ENCODE measurements at regions of chr11 and their contacts with region 1.

Region 1: GRCh38 chr11:102341844-102342318 is 5.1 kb upstream of the BIRC2 start:
- DNase-seq: peak; percentile 60
- H3K4me3 ChIP-seq: no peak overlapping the region
- H3K27ac ChIP-seq: no peak overlapping the region
- H3K4me1 ChIP-seq: peaks cover 0 to 6% of the 10 kb centered on the region in 2 experiments; a peak in 3 of 4 replicates
- H3K27me3 ChIP-seq: no peaks in the 10 kb centered on the region
- CTCF ChIP-seq: peak; percentile 88
- EP300 ChIP-seq: no peak
- RAD21 ChIP-seq: peak; percentile 80

Region 2: GRCh38 chr11:102287964-102288724 is 53.7 kb before region 1 on chr11:
- CTCF ChIA-PET with region 1: interaction called, 40 read pairs
- POLR2A ChIA-PET with region 1: no interaction called
- DNase-seq: peak; percentile 80
- H3K4me3 ChIP-seq: peak overlapping the region; percentile 38 to 48
- H3K27ac ChIP-seq: peak overlapping the region; percentile 33 to 84; a peak in 3 of 4 replicates
- H3K4me1 ChIP-seq: peaks cover 19 to 20% of the 10 kb centered on the region in 2 experiments
- H3K27me3 ChIP-seq: no peaks in the 10 kb centered on the region
- CTCF ChIP-seq: peak; percentile 76
- EP300 ChIP-seq: no peak
- RAD21 ChIP-seq: peak; percentile 88

Region 3: DNA sequence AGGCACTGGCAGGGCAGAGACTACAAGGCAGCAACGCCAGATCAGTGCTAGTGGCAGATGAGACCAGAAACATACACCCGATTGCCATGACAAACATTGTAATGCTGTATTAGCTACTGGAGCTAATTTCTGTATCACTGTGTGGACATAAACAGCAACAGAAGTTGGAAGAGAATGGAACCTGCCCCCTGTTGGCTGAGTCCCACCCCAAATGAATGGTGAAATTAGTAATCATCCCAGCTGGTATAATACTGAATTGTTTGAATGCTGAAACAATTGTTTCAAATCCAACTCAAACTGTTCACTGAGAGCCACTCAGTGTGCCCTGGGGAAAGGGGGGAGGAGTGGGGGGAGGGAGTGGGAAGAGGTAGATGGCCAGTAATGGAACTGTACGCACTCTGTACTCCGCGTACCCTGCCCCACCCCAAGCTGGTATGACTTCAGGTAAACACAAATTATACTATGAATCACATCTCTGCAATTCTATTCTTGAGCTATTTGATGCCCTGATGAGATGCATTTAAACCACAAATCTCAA is 35.8 kb before region 1 on chr11:
- CTCF ChIA-PET with region 1: interaction called, 17 read pairs
- POLR2A ChIA-PET with region 1: no interaction called
- DNase-seq: peak; percentile 33
- H3K4me3 ChIP-seq: no peak overlapping the region
- H3K27ac ChIP-seq: 0 out of 4 replicates have a peak overlapping the region, but pooled peaks of 1 of the 2 experiments have one; percentile 17
- H3K4me1 ChIP-seq: peaks cover 10 to 16% of the 10 kb centered on the region in 2 experiments; a peak in 3 of 4 replicates
- H3K27me3 ChIP-seq: no peaks in the 10 kb centered on the region
- CTCF ChIP-seq: peak; percentile 36
- EP300 ChIP-seq: no peak
- RAD21 ChIP-seq: peak; percentile 13; the same call in 1 of the 2 replicates

Region 4: DNA sequence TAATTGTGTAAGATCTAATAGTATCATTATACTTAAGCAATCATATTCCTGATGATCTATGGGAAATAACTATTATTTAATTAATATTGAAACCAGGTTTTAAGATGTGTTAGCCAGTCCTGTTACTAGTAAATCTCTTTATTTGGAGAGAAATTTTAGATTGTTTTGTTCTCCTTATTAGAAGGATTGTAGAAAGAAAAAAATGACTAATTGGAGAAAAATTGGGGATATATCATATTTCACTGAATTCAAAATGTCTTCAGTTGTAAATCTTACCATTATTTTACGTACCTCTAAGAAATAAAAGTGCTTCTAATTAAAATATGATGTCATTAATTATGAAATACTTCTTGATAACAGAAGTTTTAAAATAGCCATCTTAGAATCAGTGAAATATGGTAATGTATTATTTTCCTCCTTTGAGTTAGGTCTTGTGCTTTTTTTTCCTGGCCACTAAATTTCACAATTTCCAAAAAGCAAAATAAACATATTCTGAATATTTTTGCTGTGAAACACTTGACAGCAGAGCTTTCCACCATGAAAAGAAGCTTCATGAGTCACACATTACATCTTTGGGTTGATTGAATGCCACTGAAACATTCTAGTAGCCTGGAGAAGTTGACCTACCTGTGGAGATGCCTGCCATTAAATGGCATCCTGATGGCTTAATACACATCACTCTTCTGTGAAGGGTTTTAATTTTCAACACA is 18.2 kb before region 1 on chr11:
- CTCF ChIA-PET with region 1: interaction called, 11 read pairs
- POLR2A ChIA-PET with region 1: no interaction called
- DNase-seq: no peak
- H3K4me3 ChIP-seq: no peak overlapping the region
- H3K27ac ChIP-seq: peak overlapping the region in 1 of 2 experiments; percentile 41; a peak in 2 of 4 replicates
- H3K4me1 ChIP-seq: peaks cover 0 to 14% of the 10 kb centered on the region in 2 experiments; a peak in 2 of 4 replicates
- H3K27me3 ChIP-seq: no peaks in the 10 kb centered on the region
- CTCF ChIP-seq: no peak
- EP300 ChIP-seq: peak in 1 of 2 experiments; percentile 25; a peak in 1 of 4 replicates
- RAD21 ChIP-seq: no peak

Region 5: GRCh38 chr11:102390667-102391465 is 49.0 kb after region 1 on chr11:
- CTCF ChIA-PET with region 1: interaction called, 13 read pairs
- POLR2A ChIA-PET with region 1: no interaction called
- DNase-seq: peak; percentile 63
- H3K4me3 ChIP-seq: no peak overlapping the region; a peak in 1 of 4 replicates
- H3K27ac ChIP-seq: 0 out of 4 replicates have a peak overlapping the region, but pooled peaks of 1 of the 2 experiments have one; percentile 4
- H3K4me1 ChIP-seq: no peaks in the 10 kb centered on the region; a peak in 1 of 4 replicates
- H3K27me3 ChIP-seq: no peaks in the 10 kb centered on the region
- CTCF ChIP-seq: peak; percentile 83
- EP300 ChIP-seq: no peak
- RAD21 ChIP-seq: peak; percentile 72

Region 6: GRCh38 chr11:103043826-103044624 is 702.1 kb after region 1 on chr11:
- CTCF ChIA-PET with region 1: no interaction called
- POLR2A ChIA-PET with region 1: no interaction called
- DNase-seq: no peak
- H3K4me3 ChIP-seq: no peak overlapping the region
- H3K27ac ChIP-seq: no peak overlapping the region
- H3K4me1 ChIP-seq: no peaks in the 10 kb centered on the region; a peak in 1 of 4 replicates
- H3K27me3 ChIP-seq: no peaks in the 10 kb centered on the region
- CTCF ChIP-seq: no peak
- EP300 ChIP-seq: no peak
- RAD21 ChIP-seq: no peak

Measured in SK-N-SH (cell line).